ENCODE measurements at regions of chr10 and their contacts with region 1.

Region 1: GRCh38 chr10:28676968-28677887 is at the start of gene BAMBI:
- DNase-seq: peak; percentile 85
- ATAC-seq: peak; percentile 97
- H3K4me3 Mint-ChIP-seq: peak within 1 kb of the TSS; percentile 81
- H3K27ac Mint-ChIP-seq: no peak within 1 kb of the TSS
- H3K4me1 Mint-ChIP-seq: peaks cover 30% of the 10 kb centered on the region
- H3K27me3 Mint-ChIP-seq: peaks cover 51% of the 10 kb centered on the region
- CTCF ChIP-seq: no peak
- total RNA-seq, gene BAMBI: 0.16 and 0.32 TPM in 2 replicates

Region 2: GRCh38 chr10:27504007-27504807 is 1173.0 kb before region 1 on chr10 and contains the start of gene RAB18:
- CTCF ChIA-PET with region 1: no interaction called
- POLR2A ChIA-PET with region 1: no interaction called
- intact Hi-C with region 1: loop called (anchors 2 kb)
- DNase-seq: peak; percentile 93
- ATAC-seq: peak; percentile 96
- H3K4me3 Mint-ChIP-seq: peak within 1 kb of the TSS; percentile 100
- H3K27ac Mint-ChIP-seq: peak within 1 kb of the TSS; percentile 99
- H3K4me1 Mint-ChIP-seq: peaks cover 41% of the 10 kb centered on the region
- H3K27me3 Mint-ChIP-seq: no peaks in the 10 kb centered on the region
- CTCF ChIP-seq: no peak
- total RNA-seq, gene RAB18: 48.3 and 55.6 TPM in 2 replicates

Region 3: DNA sequence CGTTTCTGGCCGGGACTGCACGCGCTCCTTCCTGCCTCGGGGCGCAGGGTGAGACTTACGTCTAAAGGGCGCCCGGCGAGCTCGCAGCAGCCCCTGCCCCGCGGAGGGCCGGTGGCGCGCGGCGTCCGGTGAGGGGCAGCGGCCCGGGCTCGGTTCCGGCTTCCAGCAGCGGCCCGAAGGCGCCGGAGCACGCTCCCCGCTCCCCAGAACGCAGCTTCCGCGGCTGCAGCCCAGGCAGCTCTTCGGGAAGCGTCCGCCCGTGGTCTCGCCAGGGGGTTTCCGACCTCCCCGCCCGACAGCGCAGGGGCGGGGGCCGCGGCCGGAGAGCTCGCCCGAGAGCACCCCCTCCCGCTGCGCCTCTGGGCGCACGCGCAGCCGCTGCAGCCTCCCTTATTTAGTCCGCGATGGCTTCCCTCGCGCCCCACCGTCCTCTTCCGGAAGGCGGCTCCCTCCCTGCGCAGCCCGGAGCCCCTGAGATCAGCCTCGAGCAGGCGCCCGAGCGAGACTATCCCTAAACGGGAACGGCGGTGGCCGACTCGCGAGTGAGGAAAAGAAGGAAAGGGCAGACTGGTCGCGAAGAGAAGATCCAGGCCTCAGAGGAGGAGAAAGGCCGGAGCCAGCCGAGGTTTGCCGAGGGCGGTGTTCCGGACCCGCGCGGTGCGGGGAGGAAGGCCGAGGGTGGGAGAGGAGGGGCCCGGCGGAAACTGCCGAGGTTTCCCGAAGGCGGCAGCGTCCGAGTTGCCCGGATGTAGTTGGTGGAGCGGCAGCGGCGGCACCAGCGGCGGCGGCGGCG is 144.6 kb before region 1 on chr10 and contains the start of gene WAC:
- CTCF ChIA-PET with region 1: no interaction called
- POLR2A ChIA-PET with region 1: interaction called, 4 read pairs
- intact Hi-C with region 1: loop called (anchors 2 kb)
- DNase-seq: peak; percentile 97
- ATAC-seq: peak; percentile 79
- H3K4me3 Mint-ChIP-seq: peak within 1 kb of the TSS; percentile 99
- H3K27ac Mint-ChIP-seq: peak within 1 kb of the TSS; percentile 100
- H3K4me1 Mint-ChIP-seq: peaks cover 63% of the 10 kb centered on the region
- H3K27me3 Mint-ChIP-seq: no peaks in the 10 kb centered on the region
- CTCF ChIP-seq: no peak
- total RNA-seq, gene WAC: 145 and 159 TPM in 2 replicates

Region 4: DNA sequence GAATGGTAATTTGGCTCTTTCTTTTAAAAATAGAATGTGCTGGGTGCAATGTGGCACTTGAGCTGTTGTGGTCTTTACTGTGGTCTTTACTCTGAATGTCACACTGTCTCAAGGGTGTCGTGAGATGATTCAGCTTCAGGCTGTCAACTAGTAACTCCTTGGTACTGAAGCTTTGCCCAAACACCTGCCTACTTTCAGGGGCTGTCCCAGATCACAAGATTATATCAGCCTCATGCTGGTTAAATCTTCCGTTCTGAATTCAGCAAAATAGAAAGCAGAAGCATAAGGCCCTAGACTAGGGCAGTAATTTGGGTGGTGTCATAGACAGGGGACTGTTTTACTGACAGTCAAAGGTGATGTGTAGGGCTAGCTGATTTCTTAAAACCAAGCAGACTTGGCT is 111.0 kb after region 1 on chr10:
- CTCF ChIA-PET with region 1: no interaction called
- POLR2A ChIA-PET with region 1: no interaction called
- intact Hi-C with region 1: loop called (anchors 1 kb)
- DNase-seq: no peak
- ATAC-seq: peak; percentile 84
- H3K4me3 Mint-ChIP-seq: no peak overlapping the region
- H3K27ac Mint-ChIP-seq: peak overlapping the region; percentile 10
- H3K4me1 Mint-ChIP-seq: peaks cover 6% of the 10 kb centered on the region
- H3K27me3 Mint-ChIP-seq: no peaks in the 10 kb centered on the region
- CTCF ChIP-seq: no peak

Region 5: DNA sequence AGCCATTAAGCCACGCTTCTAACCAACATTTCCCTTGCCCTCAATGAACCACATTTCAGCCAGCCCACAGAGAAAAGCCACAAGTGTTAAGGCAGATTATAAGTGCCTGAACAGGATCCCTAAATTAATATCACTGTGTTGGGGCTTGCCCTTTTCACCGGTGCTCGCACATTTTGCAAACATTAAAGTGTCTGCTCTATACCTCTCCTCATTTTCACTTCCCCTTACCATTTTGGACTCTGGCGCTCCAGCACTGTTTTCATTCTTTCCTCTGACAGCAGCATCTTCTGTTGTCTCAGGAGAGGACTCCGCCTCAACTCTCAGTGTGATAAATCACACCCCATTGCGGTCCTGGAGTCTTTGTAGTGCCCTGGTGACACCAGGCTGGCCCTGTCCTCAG is 274.3 kb after region 1 on chr10:
- CTCF ChIA-PET with region 1: no interaction called
- POLR2A ChIA-PET with region 1: no interaction called
- intact Hi-C with region 1: no loop called
- DNase-seq: no peak
- ATAC-seq: no peak
- H3K4me3 Mint-ChIP-seq: no peak overlapping the region
- H3K27ac Mint-ChIP-seq: no peak overlapping the region
- H3K4me1 Mint-ChIP-seq: no peaks in the 10 kb centered on the region
- H3K27me3 Mint-ChIP-seq: peaks cover 9% of the 10 kb centered on the region
- CTCF ChIP-seq: no peak

Region 6: DNA sequence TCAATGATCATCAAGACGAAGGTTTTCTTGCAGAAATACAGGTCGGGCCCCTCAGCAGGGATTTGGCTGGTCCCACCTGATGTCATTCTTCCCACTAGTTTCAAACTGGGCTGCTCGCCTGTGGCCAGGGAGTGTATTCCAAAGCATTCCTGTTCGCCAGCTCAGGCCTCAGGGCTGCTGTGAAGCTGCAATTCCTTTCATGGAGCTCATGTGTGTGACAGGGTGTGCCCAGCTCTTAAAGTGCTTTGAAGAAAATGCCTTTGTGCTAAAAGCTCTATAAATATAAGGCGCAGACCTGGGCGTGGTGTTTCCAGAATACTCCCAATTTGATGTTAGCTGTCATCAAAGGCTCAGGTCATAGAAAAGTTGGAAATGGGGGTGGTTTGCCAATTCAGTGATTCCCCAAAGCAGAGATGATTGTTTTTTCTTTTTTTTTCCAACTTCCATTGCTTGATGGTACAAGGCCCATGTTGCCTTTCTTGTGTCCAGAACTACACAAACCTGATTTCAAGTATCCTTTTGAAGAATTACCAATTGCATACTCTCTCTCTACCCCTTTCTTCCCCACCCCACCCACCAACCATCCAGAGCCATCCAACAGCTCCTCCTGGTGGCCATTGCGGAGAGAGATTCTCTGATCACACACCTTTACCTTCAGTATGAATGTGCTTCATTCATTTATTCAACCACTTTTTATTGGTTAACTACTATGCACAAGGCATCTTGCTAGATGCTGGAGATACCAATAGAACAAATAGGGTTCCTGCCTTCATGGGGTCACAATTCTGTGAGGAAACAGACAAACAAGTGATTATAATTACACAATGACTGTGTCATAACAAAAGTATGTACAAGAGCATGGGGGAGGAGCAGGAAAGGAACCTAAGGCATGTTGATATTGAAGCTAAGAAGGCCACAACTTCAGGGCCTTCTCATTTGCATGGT is 314.4 kb after region 1 on chr10:
- CTCF ChIA-PET with region 1: no interaction called
- POLR2A ChIA-PET with region 1: no interaction called
- intact Hi-C with region 1: loop called (anchors 5 kb)
- DNase-seq: no peak
- ATAC-seq: no peak
- H3K4me3 Mint-ChIP-seq: no peak overlapping the region
- H3K27ac Mint-ChIP-seq: no peak overlapping the region
- H3K4me1 Mint-ChIP-seq: no peaks in the 10 kb centered on the region
- H3K27me3 Mint-ChIP-seq: no peaks in the 10 kb centered on the region
- CTCF ChIP-seq: no peak

Region 7: GRCh38 chr10:29443745-29444523 is 766.7 kb after region 1 on chr10:
- CTCF ChIA-PET with region 1: no interaction called
- POLR2A ChIA-PET with region 1: no interaction called
- intact Hi-C with region 1: loop called (anchors 5 kb)
- DNase-seq: no peak
- ATAC-seq: no peak
- H3K4me3 Mint-ChIP-seq: no peak overlapping the region
- H3K27ac Mint-ChIP-seq: no peak overlapping the region
- H3K4me1 Mint-ChIP-seq: no peaks in the 10 kb centered on the region
- H3K27me3 Mint-ChIP-seq: no peaks in the 10 kb centered on the region
- CTCF ChIP-seq: no peak

Measured in activated B cell treated with CpG ODN at 0.5 μM for 24 hours (primary cell).